ENCODE measurements at regions of chr16 and their contacts with region 1.

Region 1: GRCh38 chr16:9297437-9298113 is 206.1 kb downstream of the HAPSTR1 start:
- DNase-seq: no peak
- ATAC-seq: no peak
- H3K4me3 ChIP-seq: no peak overlapping the region
- H3K27ac ChIP-seq: no peak overlapping the region
- H3K4me1 ChIP-seq: no peaks in the 10 kb centered on the region
- H3K27me3 ChIP-seq: peaks cover 9% of the 10 kb centered on the region
- CTCF ChIP-seq: peak; percentile 88

Region 2: DNA sequence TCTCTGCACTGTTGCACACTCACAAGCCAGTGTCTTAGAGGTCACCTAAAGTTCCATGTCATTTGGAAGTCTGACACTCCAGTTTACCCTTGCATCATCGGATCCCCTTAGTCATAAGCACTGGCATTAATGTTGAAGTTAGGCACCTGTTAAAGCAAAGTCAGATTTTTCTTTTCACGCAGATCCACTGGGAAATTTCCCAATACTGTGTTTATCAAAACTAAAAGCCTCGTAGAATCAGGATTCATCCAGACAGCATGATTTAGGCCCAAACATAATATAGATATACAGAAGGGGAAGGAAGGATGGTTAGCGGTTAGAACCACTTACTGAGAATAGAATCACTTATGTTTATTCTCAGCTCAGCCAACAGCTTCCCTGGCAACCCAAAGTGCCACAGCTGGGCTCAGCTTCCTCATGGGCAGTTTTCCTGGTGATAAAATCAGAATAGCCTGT is 236.2 kb before region 1 on chr16:
- CTCF ChIA-PET with region 1: no interaction called
- POLR2A ChIA-PET with region 1: no interaction called
- in situ Hi-C with region 1: no loop called
- intact Hi-C with region 1: no loop called
- DNase-seq: no peak
- ATAC-seq: peak; percentile 24; the same call in 1 of the 2 replicates
- H3K4me3 ChIP-seq: no peak overlapping the region
- H3K27ac ChIP-seq: peak overlapping the region; percentile 37; the same call in 1 of the 2 replicates
- H3K4me1 ChIP-seq: no peaks in the 10 kb centered on the region
- H3K27me3 ChIP-seq: no peaks in the 10 kb centered on the region
- CTCF ChIP-seq: no peak

Region 3: DNA sequence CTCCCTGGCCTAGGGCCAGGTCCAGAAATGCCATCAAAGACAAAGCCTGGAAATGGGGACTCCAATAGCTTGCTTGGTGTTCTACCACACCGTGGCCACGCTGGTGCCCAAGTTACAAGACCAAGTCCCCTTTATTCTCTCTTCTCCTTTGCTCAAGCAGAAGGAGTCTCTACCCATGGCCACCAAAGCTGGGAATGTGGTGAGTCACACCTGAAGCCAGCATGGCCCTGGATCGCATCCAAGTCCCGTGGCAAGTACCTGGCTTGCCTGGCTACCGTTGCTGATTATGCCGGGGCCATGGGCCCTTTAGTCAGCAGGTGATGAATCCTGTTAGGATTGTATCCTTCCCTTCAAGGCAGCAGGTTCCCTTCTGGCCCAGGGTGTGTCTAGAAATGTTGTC is 53.9 kb after region 1 on chr16:
- CTCF ChIA-PET with region 1: no interaction called
- POLR2A ChIA-PET with region 1: interaction called, 11 read pairs
- in situ Hi-C with region 1: no loop called
- intact Hi-C with region 1: no loop called
- DNase-seq: no peak
- ATAC-seq: no peak
- H3K4me3 ChIP-seq: no peak overlapping the region
- H3K27ac ChIP-seq: no peak overlapping the region
- H3K4me1 ChIP-seq: no peaks in the 10 kb centered on the region
- H3K27me3 ChIP-seq: 0 out of 2 replicates have a peak, but pooled peaks cover 5% of the 10 kb centered on the region
- CTCF ChIP-seq: no peak

Region 4: DNA sequence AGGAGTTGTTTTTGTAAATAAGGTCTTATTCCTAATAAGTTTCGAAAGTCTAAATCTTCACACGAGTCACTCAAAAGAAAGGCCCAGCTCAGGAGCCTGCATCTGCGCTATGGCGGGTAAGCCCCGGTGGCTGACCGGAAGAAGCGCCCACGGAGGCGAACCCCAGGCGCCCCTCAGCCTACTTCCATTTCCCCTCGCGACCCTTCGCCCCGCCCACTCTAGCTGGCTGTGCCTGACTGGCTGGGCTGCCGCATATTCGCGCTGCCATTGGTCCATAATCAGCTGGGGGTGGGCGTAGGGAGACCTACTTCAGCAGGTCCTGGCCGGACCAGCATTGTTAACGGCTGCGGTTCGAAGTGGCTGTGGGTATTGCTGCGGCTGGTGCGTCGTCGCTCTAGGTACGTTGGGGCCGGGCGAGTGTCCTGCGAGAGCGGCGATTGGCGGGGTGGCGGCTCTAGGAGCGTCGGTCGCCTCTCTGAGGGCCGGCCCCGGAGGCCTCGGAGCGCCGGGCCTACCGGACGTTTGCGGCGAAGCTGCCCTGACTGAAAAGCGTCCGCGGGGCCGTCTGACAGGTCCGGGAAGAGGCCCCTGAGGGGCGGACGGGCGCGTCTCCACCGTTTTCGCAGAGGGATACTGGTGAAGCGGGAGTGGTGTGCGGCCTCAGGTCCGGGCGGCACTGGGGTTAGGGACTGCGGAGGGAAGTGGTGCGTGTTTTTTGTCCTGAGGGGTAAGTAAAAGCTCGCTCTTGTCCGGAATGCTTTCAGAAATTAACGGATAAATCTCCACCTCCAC is 1088.3 kb after region 1 on chr16 and contains the start of gene ATF7IP2:
- CTCF ChIA-PET with region 1: no interaction called
- POLR2A ChIA-PET with region 1: no interaction called
- in situ Hi-C with region 1: no loop called
- intact Hi-C with region 1: no loop called
- DNase-seq: peak; percentile 80
- ATAC-seq: peak; percentile 98
- H3K4me3 ChIP-seq: peak within 1 kb of the TSS; percentile 72 to 99
- H3K27ac ChIP-seq: peak within 1 kb of the TSS; percentile 92
- H3K4me1 ChIP-seq: peaks cover 6% of the 10 kb centered on the region; the same call in 1 of the 2 replicates
- H3K27me3 ChIP-seq: no peaks in the 10 kb centered on the region
- CTCF ChIP-seq: no peak
- total RNA-seq, gene ATF7IP2: 25.2 TPM

Measured in Panc1 (cell line).